Caco-2 (cell line): ENCODE measurements at regions of chr2 and their contacts with region 1.

Region 1: DNA sequence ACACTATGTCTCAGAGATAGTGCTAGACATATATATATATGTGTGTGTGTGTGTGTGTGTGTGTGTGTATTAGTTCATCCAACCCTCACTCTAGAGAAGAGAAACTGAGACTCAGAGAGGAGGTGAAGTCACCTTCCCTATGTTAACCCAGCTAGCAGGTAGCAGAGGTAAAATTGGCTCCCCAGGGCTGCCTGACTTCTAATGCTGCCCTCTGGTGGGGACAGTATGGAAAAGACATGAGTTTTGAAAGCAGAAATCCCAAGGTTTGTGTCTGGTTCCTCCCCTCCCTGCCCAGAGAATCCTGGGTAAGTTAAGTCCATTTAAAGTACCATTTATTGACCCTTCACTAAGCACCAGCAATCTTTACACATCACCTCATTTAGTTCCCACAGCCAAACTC is 137.7 kb downstream of the THNSL2 start:
- DNase-seq: peak in 1 of 2 experiments; percentile 61
- H3K4me3 ChIP-seq: no peak overlapping the region
- H3K4me3 Mint-ChIP-seq: no peak overlapping the region
- H3K27ac Mint-ChIP-seq: no peak overlapping the region
- H3K4me1 ChIP-seq: no peaks in the 10 kb centered on the region
- H3K4me1 Mint-ChIP-seq: no peaks in the 10 kb centered on the region
- H3K27me3 ChIP-seq: no peaks in the 10 kb centered on the region
- H3K27me3 Mint-ChIP-seq: peaks cover 4% of the 10 kb centered on the region
- CTCF ChIP-seq: peak; percentile 39 to 52

Region 2: GRCh38 chr2:88254437-88255091 is 53.3 kb before region 1 on chr2:
- CTCF ChIA-PET with region 1: interaction called, 6 read pairs
- POLR2A ChIA-PET with region 1: no interaction called
- intact Hi-C with region 1: loop called (anchors 5 kb)
- DNase-seq: no peak
- H3K4me3 ChIP-seq: no peak overlapping the region
- H3K4me3 Mint-ChIP-seq: no peak overlapping the region
- H3K27ac Mint-ChIP-seq: no peak overlapping the region
- H3K4me1 ChIP-seq: no peaks in the 10 kb centered on the region
- H3K4me1 Mint-ChIP-seq: peaks cover 6% of the 10 kb centered on the region
- H3K27me3 ChIP-seq: no peaks in the 10 kb centered on the region
- H3K27me3 Mint-ChIP-seq: peaks cover 21% of the 10 kb centered on the region
- CTCF ChIP-seq: no peak

Region 3: DNA sequence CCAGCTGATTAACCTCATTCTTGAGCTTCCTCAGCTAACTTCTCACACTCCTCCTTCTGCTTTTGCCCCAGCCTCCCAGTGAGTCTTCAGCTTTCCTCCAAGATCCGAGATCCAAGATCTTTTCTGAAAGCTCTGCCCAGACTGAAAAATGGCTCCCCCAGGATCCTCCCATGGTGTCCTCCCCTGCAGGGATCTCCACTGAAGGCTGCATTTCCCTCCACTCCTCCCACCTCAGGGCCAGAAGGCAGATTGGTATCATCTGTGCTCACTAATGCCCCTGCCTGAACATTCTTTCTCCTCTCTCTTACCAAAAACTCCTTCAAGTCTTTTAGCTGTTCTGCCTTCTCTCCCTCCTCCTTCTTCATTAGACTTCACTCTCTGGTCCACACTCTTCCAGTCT is 150.8 kb after region 1 on chr2:
- CTCF ChIA-PET with region 1: no interaction called
- POLR2A ChIA-PET with region 1: no interaction called
- intact Hi-C with region 1: loop called (anchors 2 kb)
- DNase-seq: no peak
- H3K4me3 ChIP-seq: no peak overlapping the region
- H3K4me3 Mint-ChIP-seq: no peak overlapping the region
- H3K27ac Mint-ChIP-seq: no peak overlapping the region
- H3K4me1 ChIP-seq: peaks cover 11% of the 10 kb centered on the region; the same call in 1 of the 2 replicates
- H3K4me1 Mint-ChIP-seq: peaks cover 8% of the 10 kb centered on the region
- H3K27me3 ChIP-seq: no peaks in the 10 kb centered on the region
- H3K27me3 Mint-ChIP-seq: peaks cover 9% of the 10 kb centered on the region
- CTCF ChIP-seq: no peak